Calu3 (cell line): ENCODE measurements at regions of chr20 and their contacts with region 1.

Region 1: GRCh38 chr20:58864350-58864749 is 11.8 kb downstream of the GNAS start:
- DNase-seq: peak; percentile 29
- H3K4me3 Mint-ChIP-seq: no peak overlapping the region
- H3K27ac Mint-ChIP-seq: no peak overlapping the region
- H3K4me1 Mint-ChIP-seq: no peaks in the 10 kb centered on the region
- H3K27me3 Mint-ChIP-seq: peaks cover 33% of the 10 kb centered on the region
- CTCF ChIP-seq: peak; percentile 45

Region 2: DNA sequence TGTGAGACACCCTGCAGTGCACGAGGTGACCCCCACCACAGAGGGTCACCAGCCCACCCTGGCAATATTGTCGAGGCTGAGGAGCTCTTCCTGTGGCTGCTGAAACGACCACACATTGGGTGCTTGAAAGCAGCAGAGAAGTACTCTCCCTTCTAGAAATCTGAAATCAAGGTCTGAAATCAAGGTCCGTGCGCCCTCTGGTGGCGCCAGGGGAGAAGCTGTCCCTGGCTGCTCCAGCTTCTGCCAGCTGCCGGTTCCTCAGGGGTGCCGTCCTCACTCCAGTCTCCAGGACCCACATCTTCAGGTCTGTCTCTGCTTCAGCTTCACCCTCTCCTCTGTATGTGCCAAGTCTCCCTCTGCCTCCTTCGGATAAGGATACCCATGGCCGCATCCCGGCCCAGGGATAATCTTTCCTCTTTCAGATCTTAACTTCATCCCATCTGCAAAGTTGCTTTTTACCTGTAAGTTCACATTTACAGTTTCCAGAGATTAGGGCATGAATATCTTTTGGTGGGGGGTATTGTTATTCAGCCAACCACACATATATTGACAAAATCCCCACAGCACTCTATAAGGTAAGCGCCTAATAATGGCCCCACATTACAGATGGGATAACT is 631.7 kb after region 1 on chr20:
- CTCF ChIA-PET with region 1: interaction called, 3 read pairs
- intact Hi-C with region 1: loop called (anchors 2 kb)
- DNase-seq: peak; percentile 90
- H3K4me3 Mint-ChIP-seq: no peak overlapping the region
- H3K27ac Mint-ChIP-seq: no peak overlapping the region
- H3K4me1 Mint-ChIP-seq: no peaks in the 10 kb centered on the region
- H3K27me3 Mint-ChIP-seq: peaks cover 99% of the 10 kb centered on the region
- CTCF ChIP-seq: peak; percentile 96